Upper lobe of right lung (tissue), 1 donor: ENCODE measurements at regions of chr11 and their contacts with region 1.

Region 1: DNA sequence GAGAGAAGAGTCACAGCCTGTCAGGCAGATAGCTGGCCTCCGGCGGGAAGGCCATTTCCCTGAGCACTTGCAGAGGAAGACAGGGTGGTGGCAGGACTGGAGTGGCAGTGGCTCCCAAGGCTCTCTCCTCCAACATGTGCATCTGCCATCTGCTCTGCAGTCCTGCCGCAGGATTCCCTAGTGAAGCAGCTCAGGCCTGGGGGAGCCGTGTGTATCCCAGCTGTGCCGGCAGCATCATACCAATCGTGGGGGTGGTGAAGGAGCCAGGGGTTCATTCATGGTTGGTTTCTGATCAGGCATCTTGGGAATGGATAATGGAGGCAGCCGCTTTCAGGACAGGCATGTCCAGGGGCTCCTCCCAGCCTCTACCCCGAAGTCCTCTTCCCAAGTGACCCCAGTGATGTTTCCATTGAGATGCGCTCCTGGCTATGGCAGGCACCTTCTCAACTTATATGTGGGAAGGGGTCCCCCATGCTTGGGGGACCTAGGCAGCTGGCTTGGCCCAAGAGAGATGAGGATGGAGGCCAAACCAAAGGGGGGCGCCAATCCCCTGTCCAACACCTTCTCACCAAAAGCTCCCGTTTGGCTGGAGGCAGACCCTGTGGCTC is 6.1 kb downstream of the TAGLN start:
- DNase-seq: no peak
- ATAC-seq: no peak
- H3K4me3 ChIP-seq: no peak overlapping the region
- H3K27ac ChIP-seq: no peak overlapping the region
- H3K4me1 ChIP-seq: peaks cover 4% of the 10 kb centered on the region
- H3K27me3 ChIP-seq: no peaks in the 10 kb centered on the region
- CTCF ChIP-seq: no peak

Region 2: GRCh38 chr11:117134431-117134830 is 70.9 kb before region 1 on chr11:
- intact Hi-C with region 1: loop called (anchors 5 kb)
- DNase-seq: no peak
- ATAC-seq: no peak
- H3K4me3 ChIP-seq: no peak overlapping the region
- H3K27ac ChIP-seq: no peak overlapping the region
- H3K4me1 ChIP-seq: no peaks in the 10 kb centered on the region
- H3K27me3 ChIP-seq: no peaks in the 10 kb centered on the region
- CTCF ChIP-seq: no peak